Ovary (tissue), 10 donors: ENCODE measurements at regions of chr1 and their contacts with region 1.

Region 1: GRCh38 chr1:171919891-171920887 is 78.9 kb downstream of the DNM3 start:
- DNase-seq: no peak
- H3K4me3 ChIP-seq: no peak overlapping the region
- H3K27ac ChIP-seq: no peak overlapping the region
- H3K4me1 ChIP-seq: no peaks in the 10 kb centered on the region
- H3K27me3 ChIP-seq: no peaks in the 10 kb centered on the region
- CTCF ChIP-seq: no peak
- EP300 ChIP-seq: no peak
- POLR2A ChIP-seq: no peak

Region 2: DNA sequence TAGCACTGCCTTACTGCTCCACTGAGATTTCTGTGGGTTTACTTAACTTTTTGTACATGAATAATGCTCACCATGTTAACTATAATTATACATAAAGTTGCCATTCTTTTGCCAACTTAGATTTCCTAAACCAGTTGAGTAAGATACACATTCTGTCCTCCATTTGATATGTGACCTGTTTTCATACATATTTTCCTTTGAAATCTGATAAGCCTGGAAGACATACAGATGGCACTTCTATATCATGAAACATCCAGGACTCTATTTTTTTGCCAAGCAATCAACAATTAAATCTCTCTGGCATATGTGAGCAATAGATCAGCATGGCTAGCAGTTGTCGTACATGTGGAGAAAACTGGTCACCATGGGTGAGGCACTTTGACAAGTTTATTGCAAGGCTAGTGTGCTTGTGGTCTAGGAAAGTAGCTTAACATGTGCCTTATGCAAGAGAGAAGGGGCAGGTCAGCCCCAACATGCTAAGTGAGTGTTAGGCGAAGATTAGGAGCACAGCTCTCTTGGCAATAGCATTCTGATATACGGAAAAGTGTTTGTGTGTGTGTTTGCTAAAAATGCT is 1242.1 kb before region 1 on chr1:
- intact Hi-C with region 1: loop called in 1 of 4 experiments (anchors 5 kb)
- DNase-seq: no peak
- H3K4me3 ChIP-seq: no peak overlapping the region
- H3K27ac ChIP-seq: no peak overlapping the region
- H3K4me1 ChIP-seq: peaks cover 5% of the 10 kb centered on the region
- H3K27me3 ChIP-seq: no peaks in the 10 kb centered on the region
- CTCF ChIP-seq: no peak
- EP300 ChIP-seq: no peak
- POLR2A ChIP-seq: no peak